ENCODE measurements at regions of chr4 and their contacts with region 1.

Region 1: DNA sequence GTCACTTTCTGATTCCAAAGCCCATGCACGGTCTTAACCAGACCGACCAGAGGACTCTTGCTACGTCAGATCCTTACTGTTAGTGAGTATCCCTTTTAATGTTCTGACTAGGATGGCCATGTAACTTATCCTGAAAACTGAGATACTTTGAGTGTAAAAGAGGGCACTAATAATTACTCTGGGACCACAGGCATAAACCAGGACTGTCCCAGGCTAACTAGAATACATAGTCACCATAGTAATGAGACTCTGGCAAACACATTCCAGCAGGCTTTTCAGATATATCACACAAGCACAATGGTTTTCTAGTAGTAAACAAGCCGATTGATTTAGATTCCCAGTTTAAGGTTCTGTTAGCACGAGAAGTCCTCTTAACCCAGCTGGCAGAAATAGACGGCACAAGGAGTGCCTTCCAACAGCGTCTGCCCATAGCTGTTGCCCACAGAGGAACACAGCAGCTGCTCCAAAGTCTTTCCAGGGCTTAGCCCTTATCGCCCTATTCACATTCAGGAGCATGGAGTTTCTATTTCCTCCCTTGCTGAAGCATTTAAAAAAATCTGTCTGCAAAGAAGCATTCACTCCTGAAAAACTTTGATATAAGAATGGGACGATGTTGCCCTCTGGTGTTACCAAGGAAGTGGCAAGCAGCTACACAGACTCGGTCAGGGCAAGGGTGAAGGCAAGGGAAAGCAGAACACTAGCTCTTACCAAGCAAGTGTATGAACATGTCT is 92.4 kb downstream of the CXCL13 start:
- DNase-seq: peak; percentile 27
- H3K4me3 Mint-ChIP-seq: no peak overlapping the region
- H3K27ac Mint-ChIP-seq: no peak overlapping the region
- H3K4me1 Mint-ChIP-seq: no peaks in the 10 kb centered on the region
- H3K27me3 Mint-ChIP-seq: peaks cover 2% of the 10 kb centered on the region

Region 2: GRCh38 chr4:77465271-77465670 is 232.8 kb before region 1 on chr4:
- CTCF ChIA-PET with region 1: interaction called, 4 read pairs
- intact Hi-C with region 1: loop called (anchors 10 kb)
- DNase-seq: peak; percentile 62
- H3K4me3 Mint-ChIP-seq: no peak overlapping the region
- H3K27ac Mint-ChIP-seq: no peak overlapping the region
- H3K4me1 Mint-ChIP-seq: no peaks in the 10 kb centered on the region
- H3K27me3 Mint-ChIP-seq: peaks cover 9% of the 10 kb centered on the region

Region 3: GRCh38 chr4:77618383-77619122 is 79.5 kb before region 1 on chr4:
- CTCF ChIA-PET with region 1: no interaction called
- intact Hi-C with region 1: loop called (anchors 1 kb)
- DNase-seq: peak; percentile 81
- H3K4me3 Mint-ChIP-seq: no peak overlapping the region
- H3K27ac Mint-ChIP-seq: no peak overlapping the region
- H3K4me1 Mint-ChIP-seq: peaks cover 2% of the 10 kb centered on the region
- H3K27me3 Mint-ChIP-seq: peaks cover 12% of the 10 kb centered on the region

Region 4: GRCh38 chr4:77852892-77853495 is 155.0 kb after region 1 on chr4:
- CTCF ChIA-PET with region 1: no interaction called
- intact Hi-C with region 1: loop called (anchors 5 kb)
- DNase-seq: peak; percentile 80
- H3K4me3 Mint-ChIP-seq: peak overlapping the region; percentile 52
- H3K27ac Mint-ChIP-seq: peak overlapping the region; percentile 95
- H3K4me1 Mint-ChIP-seq: peaks cover 51% of the 10 kb centered on the region
- H3K27me3 Mint-ChIP-seq: no peaks in the 10 kb centered on the region

Region 5: DNA sequence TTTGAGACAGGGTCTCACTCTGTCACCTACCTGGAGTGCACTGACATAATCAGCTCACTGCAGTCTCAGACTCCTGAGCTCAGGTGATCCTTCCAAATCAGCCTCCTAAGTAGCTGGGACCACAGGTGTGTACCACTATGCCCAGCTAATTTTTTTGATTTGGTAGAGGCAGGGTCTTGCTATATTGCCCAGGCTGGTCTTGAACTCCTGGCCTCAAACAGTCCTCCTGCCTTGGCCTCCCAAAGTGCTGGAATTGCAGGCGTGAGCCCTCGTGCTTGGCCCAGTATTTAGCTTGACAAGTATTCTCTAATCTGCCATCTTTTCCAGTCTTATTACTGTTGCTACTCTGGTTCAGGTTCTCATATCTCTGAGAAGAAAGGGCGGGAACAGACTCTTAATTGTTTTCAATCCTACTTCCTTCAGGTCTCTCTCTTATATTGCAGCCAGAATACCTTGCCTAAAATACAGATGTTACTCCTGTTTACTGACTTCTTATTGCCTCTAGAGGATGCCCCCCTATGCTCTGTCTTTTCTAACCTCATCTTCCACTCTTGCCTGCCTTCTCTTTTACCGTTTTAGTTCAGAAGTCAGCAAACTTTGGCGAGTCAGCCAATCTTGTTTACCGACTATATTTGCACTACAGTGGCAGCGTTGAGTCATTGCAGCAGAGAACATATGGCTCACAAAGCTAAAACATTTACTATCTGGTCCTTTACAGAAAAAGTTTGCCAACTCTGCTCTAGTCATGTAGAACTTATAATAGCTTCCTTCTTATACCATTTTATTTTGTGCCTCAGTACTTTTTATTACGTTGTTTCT is 183.6 kb after region 1 on chr4:
- CTCF ChIA-PET with region 1: no interaction called
- intact Hi-C with region 1: no loop called
- DNase-seq: no peak
- H3K4me3 Mint-ChIP-seq: no peak overlapping the region
- H3K27ac Mint-ChIP-seq: no peak overlapping the region
- H3K4me1 Mint-ChIP-seq: peaks cover 28% of the 10 kb centered on the region
- H3K27me3 Mint-ChIP-seq: no peaks in the 10 kb centered on the region

Region 6: DNA sequence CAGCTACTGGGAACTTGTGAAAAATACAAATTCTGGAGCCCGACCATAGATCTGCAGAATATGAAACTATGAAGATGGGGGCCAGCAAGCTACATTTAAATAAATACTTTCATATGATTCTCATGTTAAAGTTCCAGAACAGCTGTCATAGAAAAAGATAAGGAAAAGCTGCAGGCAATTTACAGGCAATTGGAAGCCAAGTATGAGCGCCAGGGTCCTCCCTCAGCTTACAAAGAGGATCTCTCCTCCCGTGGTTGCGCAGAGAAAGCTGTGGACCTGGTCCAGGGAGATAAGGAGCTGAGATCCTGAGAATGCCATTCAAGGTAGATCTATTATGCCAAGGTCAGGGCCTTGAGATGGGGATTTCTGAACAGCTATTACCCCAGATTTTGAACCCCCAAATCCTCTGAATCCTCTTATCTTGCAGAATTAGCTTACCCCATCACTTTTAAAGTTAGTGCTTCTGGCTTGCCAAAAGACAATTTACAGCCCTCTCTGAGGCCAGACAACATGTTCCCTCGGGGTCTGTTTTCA is 333.5 kb after region 1 on chr4:
- CTCF ChIA-PET with region 1: no interaction called
- intact Hi-C with region 1: no loop called
- DNase-seq: no peak
- H3K4me3 Mint-ChIP-seq: no peak overlapping the region
- H3K27ac Mint-ChIP-seq: no peak overlapping the region
- H3K4me1 Mint-ChIP-seq: no peaks in the 10 kb centered on the region
- H3K27me3 Mint-ChIP-seq: peaks cover 7% of the 10 kb centered on the region

Region 7: DNA sequence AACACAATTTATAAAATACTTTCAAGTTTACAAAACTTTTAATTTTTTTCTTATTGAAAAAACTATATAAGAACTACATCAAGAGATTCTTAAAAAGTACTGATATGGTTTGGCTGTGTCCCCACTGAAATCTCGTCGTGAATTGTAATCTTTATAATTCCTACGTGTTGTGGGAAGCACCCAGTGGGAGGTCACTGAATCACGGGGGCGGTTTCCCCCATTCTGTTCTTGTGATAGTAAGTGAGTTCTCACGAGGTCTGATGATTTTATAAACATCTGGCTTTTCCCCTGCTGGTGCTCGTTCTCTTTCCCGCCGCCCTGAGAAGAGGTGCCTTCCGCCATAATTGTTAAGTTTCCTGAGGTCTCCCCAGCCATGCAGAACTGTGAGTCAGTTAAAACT is 447.6 kb after region 1 on chr4:
- CTCF ChIA-PET with region 1: no interaction called
- intact Hi-C with region 1: no loop called
- DNase-seq: no peak
- H3K4me3 Mint-ChIP-seq: no peak overlapping the region
- H3K27ac Mint-ChIP-seq: no peak overlapping the region
- H3K4me1 Mint-ChIP-seq: no peaks in the 10 kb centered on the region
- H3K27me3 Mint-ChIP-seq: no peaks in the 10 kb centered on the region